H1 (cell line): ENCODE measurements at regions of chr12 and their contacts with region 1.

Region 1: DNA sequence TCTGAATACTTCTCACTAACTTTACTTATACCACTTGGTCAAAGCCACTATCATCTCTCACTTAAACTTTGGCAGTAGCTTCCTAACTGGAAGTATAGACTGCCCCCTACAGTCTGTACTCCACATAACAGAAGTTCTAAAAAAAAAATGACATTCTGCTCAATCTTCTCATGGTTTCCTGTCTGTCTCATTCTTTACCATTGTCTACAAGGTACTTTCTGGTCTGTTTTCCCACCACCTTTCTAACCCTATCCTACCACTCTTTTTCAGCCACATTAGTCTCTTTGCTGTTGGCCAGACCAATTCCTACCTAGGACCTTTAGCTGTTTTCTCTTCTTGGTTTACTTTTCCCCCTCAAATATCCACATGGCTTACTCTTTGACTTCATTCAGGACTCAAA is 14.7 kb downstream of the CPSF6 start:
- DNase-seq: no peak
- H3K4me3 ChIP-seq: no peak overlapping the region
- H3K27ac ChIP-seq: no peak overlapping the region
- H3K4me1 ChIP-seq: peaks cover 0 to 3% (median 0%) of the 10 kb centered on the region in 4 experiments; a peak in 1 of 7 replicates
- H3K27me3 ChIP-seq: no peaks in the 10 kb centered on the region
- CTCF ChIP-seq: peak in 2 of 3 experiments; percentile 46 to 59; a peak in 2 of 4 replicates
- EP300 ChIP-seq: no peak
- POLR2A ChIP-seq: no peak
- RAD21 ChIP-seq: peak; percentile 70 to 72

Region 2: DNA sequence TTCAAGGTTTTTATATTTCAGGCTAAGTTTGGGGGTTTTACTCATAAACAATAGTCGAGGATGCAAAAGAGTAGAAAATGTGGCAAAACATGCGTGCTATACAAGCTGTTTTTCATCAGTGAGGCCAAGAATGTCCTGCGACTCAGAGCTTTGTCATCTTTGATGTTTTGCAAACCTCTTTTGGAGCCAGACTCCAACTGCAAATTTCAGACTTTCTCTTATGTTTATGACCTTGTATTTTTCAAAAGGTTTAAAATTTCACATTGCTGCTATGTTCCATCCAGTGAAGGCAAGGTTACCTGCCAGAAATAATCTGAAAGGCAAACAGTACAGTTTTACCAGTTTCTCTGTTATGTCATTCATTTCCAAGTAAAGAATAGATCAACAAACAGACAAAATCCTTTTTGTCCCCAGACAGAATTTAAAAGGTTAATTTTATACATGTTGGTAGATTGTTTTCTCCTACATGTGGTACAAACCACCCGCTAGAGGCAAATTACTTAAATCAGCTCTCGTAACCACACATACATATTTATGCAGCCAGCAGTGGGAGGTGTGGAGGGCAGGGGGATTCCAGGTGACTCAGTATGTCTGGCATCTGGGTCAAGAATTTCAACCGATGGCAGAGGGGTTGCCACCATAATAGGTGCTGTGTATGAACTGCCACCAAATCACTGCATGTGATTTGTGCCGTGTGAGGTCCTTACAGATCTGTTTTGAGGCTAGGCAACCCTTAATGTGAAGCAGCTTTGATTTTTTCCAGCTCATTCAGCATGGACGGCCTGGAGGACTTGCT is 201.2 kb before region 1 on chr12:
- CTCF ChIA-PET with region 1: no interaction called
- POLR2A ChIA-PET with region 1: no interaction called
- DNase-seq: peak in 1 of 2 experiments; percentile 71
- H3K4me3 ChIP-seq: no peak overlapping the region
- H3K27ac ChIP-seq: peak overlapping the region; percentile 24; the same call in 1 of the 2 replicates
- H3K4me1 ChIP-seq: peaks cover 0 to 16% (median 6%) of the 10 kb centered on the region in 4 experiments; a peak in 4 of 7 replicates
- H3K27me3 ChIP-seq: no peaks in the 10 kb centered on the region; a peak in 1 of 7 replicates
- CTCF ChIP-seq: no peak
- EP300 ChIP-seq: 0 out of 3 replicates have a peak, but pooled peaks of 1 of the 2 experiments have one; percentile 62
- POLR2A ChIP-seq: no peak
- RAD21 ChIP-seq: no peak

Region 3: DNA sequence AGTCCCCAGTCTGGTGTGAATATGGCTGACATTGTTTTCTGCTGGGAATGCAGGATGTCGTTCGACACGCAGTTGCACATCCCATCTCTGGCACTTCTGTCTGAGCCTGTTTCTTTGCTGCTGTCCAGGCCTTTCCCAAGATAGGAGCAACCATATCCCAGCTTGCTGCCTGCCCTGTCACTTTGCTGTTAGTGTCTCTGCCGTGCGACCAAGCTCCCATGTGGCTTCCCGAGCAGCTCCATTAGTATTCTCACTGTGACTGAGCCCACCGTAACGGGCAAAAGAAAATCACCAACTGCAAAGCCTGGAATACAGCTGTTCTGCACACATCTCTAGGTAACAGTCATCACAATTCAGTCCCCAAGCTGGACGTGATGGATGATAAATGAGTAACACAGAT is 80.7 kb before region 1 on chr12:
- CTCF ChIA-PET with region 1: interaction called, 13 read pairs
- POLR2A ChIA-PET with region 1: no interaction called
- DNase-seq: no peak
- H3K4me3 ChIP-seq: no peak overlapping the region
- H3K27ac ChIP-seq: no peak overlapping the region
- H3K4me1 ChIP-seq: peaks cover under 1 to 3% (median 3%) of the 10 kb centered on the region in 4 experiments
- H3K27me3 ChIP-seq: no peaks in the 10 kb centered on the region
- CTCF ChIP-seq: no peak
- EP300 ChIP-seq: no peak
- POLR2A ChIP-seq: no peak
- RAD21 ChIP-seq: no peak

Region 4: GRCh38 chr12:69239352-69239921 is 14.6 kb before region 1 on chr12 and contains the start of gene CPSF6:
- CTCF ChIA-PET with region 1: interaction called, 24 read pairs
- POLR2A ChIA-PET with region 1: interaction called, 48 read pairs
- DNase-seq: peak; percentile 70 to 95
- H3K4me3 ChIP-seq: peak within 1 kb of the TSS; percentile 74 to 99 (median 88)
- H3K27ac ChIP-seq: peak within 1 kb of the TSS; percentile 94
- H3K4me1 ChIP-seq: peaks cover 0 to 10% (median 5%) of the 10 kb centered on the region in 4 experiments; a peak in 5 of 7 replicates
- H3K27me3 ChIP-seq: peaks cover 0 to 1% (median 0%) of the 10 kb centered on the region in 4 experiments; a peak in 1 of 7 replicates
- CTCF ChIP-seq: no peak
- EP300 ChIP-seq: peak in 1 of 2 experiments; percentile 83; a peak in 1 of 3 replicates
- POLR2A ChIP-seq: peak; percentile 84 to 97
- RAD21 ChIP-seq: no peak
- total RNA-seq, gene CPSF6: 156 and 167 TPM in 2 replicates

Region 5: DNA sequence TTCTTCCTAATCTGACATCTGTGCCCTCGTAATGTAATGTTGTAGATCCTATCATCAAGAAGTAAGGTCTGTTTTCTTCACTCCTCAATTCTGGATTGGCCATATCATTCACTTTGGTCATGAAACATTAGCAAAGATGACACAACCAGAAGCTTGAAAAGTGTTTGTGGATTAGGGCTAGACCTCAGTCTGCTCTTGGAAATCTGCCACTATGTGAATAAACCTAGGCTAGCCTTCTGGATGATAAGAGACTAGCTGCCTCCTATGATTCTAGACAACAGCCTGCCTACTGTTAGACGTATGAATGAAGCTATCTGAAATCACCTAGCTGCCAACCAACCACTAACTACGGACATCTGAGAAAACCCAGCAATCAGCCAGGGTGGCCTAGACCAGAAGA is 55.4 kb after region 1 on chr12:
- CTCF ChIA-PET with region 1: no interaction called
- POLR2A ChIA-PET with region 1: no interaction called
- DNase-seq: no peak
- H3K4me3 ChIP-seq: no peak overlapping the region
- H3K27ac ChIP-seq: no peak overlapping the region
- H3K4me1 ChIP-seq: no peaks in the 10 kb centered on the region
- H3K27me3 ChIP-seq: no peaks in the 10 kb centered on the region
- CTCF ChIP-seq: no peak
- EP300 ChIP-seq: no peak
- POLR2A ChIP-seq: no peak
- RAD21 ChIP-seq: no peak

Region 6: DNA sequence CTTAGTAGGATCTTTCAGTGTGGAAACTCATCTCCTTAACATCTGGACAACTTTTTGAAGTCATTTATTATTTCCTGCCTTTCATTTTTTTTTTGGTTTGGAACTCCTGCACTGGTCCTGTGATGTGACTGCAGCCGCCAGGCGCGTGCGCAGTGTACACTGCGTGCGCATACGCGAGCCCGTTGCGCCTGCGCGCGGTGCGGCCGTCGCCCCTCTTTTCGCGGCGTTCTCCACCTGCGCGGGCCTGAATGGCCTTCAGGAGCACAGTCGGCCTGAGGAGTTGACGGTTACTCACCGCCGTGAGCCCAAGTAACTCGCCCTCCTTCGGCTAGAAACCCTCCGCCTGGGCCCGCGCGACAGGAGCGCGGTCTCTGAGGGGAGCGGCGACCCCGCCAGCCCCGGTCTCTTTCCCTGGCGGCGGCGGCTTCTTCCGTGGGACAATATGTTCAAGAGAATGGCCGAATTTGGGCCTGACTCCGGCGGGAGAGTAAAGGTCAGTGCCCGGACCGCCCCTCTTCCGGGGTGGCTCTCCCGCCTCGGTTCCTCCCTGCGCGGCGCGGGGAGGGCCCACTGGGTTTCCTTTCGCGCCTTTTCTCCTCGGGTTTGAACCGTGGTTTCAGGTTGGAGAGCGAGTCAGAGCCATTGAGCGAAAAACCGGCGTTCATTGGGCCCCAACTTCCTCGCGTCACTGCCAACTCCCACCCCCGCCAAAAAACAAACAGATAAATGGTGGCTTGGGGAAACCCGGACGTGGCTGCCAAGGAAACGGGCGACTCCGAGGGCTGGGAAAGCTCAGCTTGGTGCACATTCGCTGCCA is 105.7 kb after region 1 on chr12 and contains the start of gene YEATS4:
- CTCF ChIA-PET with region 1: no interaction called
- POLR2A ChIA-PET with region 1: no interaction called
- DNase-seq: peak; percentile 65 to 85
- H3K4me3 ChIP-seq: peak within 1 kb of the TSS; percentile 37 to 83 (median 75)
- H3K27ac ChIP-seq: peak within 1 kb of the TSS; percentile 97
- H3K4me1 ChIP-seq: peaks cover 0 to 2% (median under 1%) of the 10 kb centered on the region in 4 experiments; a peak in 5 of 7 replicates
- H3K27me3 ChIP-seq: no peaks in the 10 kb centered on the region
- CTCF ChIP-seq: no peak
- EP300 ChIP-seq: no peak
- POLR2A ChIP-seq: peak; percentile 78 to 91; a peak in 2 of 3 replicates
- RAD21 ChIP-seq: no peak
- total RNA-seq, gene YEATS4: 32.4 and 32.5 TPM in 2 replicates